ENCODE measurements at regions of chr9 and their contacts with region 1.

Region 1: GRCh38 chr9:126386088-126386487 is 59.5 kb downstream of the MVB12B start:
- DNase-seq: peak in 1 of 2 experiments; percentile 24
- H3K4me3 ChIP-seq: no peak overlapping the region
- H3K27ac ChIP-seq: no peak overlapping the region
- H3K4me1 ChIP-seq: no peaks in the 10 kb centered on the region
- H3K27me3 ChIP-seq: no peaks in the 10 kb centered on the region
- CTCF ChIP-seq: peak; percentile 41; the same call in 1 of the 2 replicates

Region 2: GRCh38 chr9:126248680-126249079 is 137.4 kb before region 1 on chr9:
- CTCF ChIA-PET with region 1: no interaction called
- POLR2A ChIA-PET with region 1: no interaction called
- intact Hi-C with region 1: no loop called
- DNase-seq: peak in 1 of 2 experiments; percentile 39
- H3K4me3 ChIP-seq: no peak overlapping the region
- H3K27ac ChIP-seq: no peak overlapping the region
- H3K4me1 ChIP-seq: no peaks in the 10 kb centered on the region
- H3K27me3 ChIP-seq: peaks cover 17% of the 10 kb centered on the region; the same call in 1 of the 2 replicates
- CTCF ChIP-seq: no peak

Region 3: DNA sequence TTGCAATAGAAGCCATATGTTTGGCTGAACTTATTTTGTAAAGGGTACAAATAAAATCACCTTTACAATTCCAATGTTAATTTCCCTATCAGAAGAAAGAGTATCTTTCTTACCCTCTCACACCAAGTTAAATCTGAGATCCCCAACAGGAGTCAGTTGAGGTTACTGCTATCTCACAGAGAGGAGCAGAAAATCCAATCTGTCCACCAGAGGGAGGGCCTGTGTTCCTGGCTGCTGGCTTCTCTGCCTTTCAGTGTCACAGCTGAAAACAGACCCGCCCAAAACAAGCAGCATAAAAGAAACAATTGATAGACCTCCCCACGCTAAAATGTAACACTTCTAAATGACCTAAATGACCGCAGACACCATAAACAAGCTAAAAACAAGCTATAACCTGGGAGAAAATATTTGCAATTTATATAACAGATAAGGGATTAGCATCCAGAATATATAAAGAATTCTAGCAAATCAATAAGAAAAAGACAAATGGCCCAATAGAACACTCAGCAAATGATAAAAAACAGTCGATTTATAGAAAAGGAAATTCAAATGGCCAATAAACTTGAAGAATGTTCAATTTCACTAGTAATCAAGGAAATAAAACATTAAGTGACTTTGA is 84.0 kb before region 1 on chr9:
- CTCF ChIA-PET with region 1: no interaction called
- POLR2A ChIA-PET with region 1: no interaction called
- intact Hi-C with region 1: loop called (anchors 1 kb)
- DNase-seq: peak; percentile 40 to 51
- H3K4me3 ChIP-seq: no peak overlapping the region
- H3K27ac ChIP-seq: no peak overlapping the region
- H3K4me1 ChIP-seq: no peaks in the 10 kb centered on the region
- H3K27me3 ChIP-seq: no peaks in the 10 kb centered on the region
- CTCF ChIP-seq: peak; percentile 78

Region 4: DNA sequence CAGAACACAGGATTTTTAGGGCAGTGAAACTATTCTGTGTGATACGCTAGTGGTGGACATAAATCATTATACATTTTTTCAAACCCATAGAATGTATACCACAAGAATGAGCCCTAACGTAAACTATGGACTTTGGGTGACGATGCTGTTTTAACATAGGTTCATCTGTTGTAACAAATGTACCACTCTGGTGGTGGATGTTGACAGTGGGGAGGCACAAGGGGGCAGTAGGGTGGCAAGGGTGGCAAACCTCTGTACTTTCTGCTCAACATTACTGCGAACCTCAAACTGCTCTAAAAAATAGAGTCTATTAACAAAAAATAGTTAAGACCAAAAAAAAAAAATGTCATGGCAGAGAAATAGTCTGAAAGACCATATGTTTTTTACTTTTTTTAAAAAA is 68.6 kb before region 1 on chr9:
- CTCF ChIA-PET with region 1: interaction called, 5 read pairs
- POLR2A ChIA-PET with region 1: no interaction called
- intact Hi-C with region 1: loop called (anchors 1 kb)
- DNase-seq: no peak
- H3K4me3 ChIP-seq: no peak overlapping the region
- H3K27ac ChIP-seq: no peak overlapping the region
- H3K4me1 ChIP-seq: no peaks in the 10 kb centered on the region
- H3K27me3 ChIP-seq: no peaks in the 10 kb centered on the region
- CTCF ChIP-seq: peak; percentile 45; the same call in 1 of the 2 replicates

Measured in PC-9 (cell line).